ENCODE measurements at regions of chr16 and their contacts with region 1.

Region 1: DNA sequence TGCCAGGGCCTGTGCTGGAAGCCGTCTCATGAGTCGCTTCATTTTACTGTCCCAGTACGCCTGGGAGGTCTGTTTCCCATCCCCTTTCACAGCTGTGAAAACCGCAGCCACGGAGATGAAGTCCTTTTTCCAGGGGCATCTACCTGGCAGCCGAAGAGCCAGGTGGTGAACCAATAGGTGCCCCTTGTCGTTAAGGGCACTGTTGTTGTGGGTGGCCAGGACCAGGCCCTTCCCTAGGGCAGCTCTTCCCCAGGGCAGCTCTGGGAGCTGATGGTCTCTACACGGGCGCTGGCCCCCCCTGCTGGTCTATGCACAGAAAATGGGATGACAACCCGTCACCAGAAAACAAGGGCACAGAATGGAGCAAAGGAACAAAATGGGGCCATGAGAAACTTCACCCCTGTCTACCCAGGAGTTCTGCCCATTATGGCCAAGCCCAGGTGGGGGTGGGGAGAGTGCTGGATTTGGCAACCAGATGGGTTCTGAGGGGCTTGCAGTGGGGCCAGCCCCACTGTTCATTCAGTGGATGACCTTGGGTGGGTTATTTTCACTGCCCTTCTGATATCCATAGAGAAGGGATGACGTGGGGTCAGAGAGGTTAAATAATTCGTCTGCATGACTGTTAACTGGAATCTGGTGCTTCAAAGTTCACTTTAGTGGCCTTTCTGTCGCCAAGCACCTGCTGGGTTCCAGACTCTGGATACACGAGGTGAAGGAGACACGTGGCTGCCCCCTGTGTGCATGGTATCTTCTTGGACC is 11.5 kb downstream of the RMI2 start:
- DNase-seq: peak; percentile 73
- H3K4me3 Mint-ChIP-seq: peak overlapping the region; percentile 13
- H3K27ac Mint-ChIP-seq: peak overlapping the region; percentile 18
- H3K4me1 Mint-ChIP-seq: peaks cover 58% of the 10 kb centered on the region
- H3K27me3 Mint-ChIP-seq: peaks cover 28% of the 10 kb centered on the region

Region 2: GRCh38 chr16:11051879-11052808 is 304.6 kb before region 1 on chr16:
- CTCF ChIA-PET with region 1: interaction called, 6 read pairs
- POLR2A ChIA-PET with region 1: interaction called, 4 read pairs
- intact Hi-C with region 1: loop called (anchors 5 kb)
- DNase-seq: peak; percentile 94
- H3K4me3 Mint-ChIP-seq: peak overlapping the region; percentile 24
- H3K27ac Mint-ChIP-seq: peak overlapping the region; percentile 94
- H3K4me1 Mint-ChIP-seq: peaks cover 64% of the 10 kb centered on the region
- H3K27me3 Mint-ChIP-seq: no peaks in the 10 kb centered on the region

Region 3: DNA sequence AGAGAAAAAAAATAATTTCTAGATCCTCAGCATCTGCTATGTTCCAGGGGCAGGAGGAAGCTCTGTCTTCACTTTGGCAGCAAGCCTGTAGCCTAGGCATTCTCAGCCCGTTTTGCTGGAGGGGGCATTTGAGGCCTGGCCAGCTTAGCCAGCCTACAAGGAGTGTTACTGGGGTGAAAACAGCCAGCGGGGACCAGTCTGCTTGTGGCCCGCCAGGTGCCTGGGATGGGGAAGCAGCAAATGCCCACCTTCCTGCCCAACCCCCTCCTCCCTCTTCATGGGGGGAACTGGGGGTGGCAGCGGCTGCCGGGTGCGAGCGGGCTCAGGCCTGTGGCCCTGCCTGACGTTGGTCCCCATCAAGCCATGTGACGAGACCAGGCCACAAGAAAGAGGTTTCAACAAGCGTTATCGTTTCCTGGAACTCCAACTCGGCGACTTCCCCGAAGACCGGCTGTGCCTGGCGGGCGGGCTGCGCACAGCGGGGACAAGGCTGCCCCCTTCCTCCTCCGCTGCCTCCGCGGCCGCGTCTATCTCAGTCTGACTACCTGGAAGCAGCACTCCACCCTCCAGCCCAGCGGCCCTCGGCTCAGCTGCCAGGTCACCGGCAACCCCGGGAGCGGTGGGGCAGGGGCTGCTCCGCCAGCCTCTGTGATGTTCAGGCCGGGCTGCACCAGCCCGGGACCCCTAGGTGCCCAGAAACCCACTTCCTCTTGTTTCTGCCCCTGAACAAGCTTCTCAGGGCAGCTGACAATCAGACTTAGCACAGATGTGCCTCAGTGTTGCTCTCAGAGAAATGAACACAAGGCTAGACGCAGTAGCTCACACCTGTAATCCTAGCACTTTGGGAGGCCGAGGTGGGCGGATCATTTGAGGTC is 123.7 kb before region 1 on chr16:
- CTCF ChIA-PET with region 1: no interaction called
- POLR2A ChIA-PET with region 1: no interaction called
- intact Hi-C with region 1: loop called (anchors 1 kb)
- DNase-seq: peak; percentile 97
- H3K4me3 Mint-ChIP-seq: peak overlapping the region; percentile 62
- H3K27ac Mint-ChIP-seq: peak overlapping the region; percentile 99
- H3K4me1 Mint-ChIP-seq: peaks cover 74% of the 10 kb centered on the region
- H3K27me3 Mint-ChIP-seq: no peaks in the 10 kb centered on the region

Region 4: DNA sequence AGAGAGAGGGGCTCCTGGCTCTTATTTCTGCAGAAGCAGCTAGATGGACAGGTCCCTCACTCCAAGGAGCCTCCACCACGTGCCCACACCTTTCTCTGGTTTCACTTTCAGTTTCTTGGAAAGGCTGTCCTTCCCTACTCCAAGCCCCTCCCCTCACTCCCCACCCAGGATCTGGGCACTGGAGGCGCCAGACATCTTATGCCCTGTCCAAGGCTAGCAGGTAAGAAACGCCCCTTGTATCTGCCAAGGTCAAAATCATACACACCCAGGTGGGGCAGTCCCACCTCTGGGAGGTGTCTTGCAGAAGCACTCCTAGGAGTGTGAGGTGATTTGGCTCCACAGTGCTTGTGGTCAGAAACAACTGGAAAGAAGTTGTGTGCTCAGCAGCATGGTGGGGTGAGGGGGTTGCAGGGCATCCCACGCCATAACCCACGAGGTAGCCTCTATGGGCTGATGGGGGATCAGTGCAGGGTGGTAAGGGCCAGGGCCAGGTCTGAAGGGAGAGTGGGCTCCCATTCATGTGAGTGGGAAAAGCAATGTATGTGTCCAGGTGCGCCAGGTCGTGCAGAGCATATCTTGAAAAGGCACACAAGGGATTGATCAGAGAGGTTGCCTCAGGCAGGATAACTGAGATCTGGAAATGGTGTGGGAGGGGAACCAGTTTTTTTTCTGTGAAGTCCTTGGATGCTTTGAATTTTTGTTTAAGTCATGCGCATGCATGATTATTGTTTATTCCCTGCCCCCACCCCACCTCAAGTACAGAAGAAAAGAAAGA is 43.8 kb before region 1 on chr16:
- CTCF ChIA-PET with region 1: interaction called, 5 read pairs
- POLR2A ChIA-PET with region 1: interaction called, 3 read pairs
- intact Hi-C with region 1: loop called (anchors 1 kb)
- DNase-seq: peak; percentile 42
- H3K4me3 Mint-ChIP-seq: no peak overlapping the region
- H3K27ac Mint-ChIP-seq: no peak overlapping the region
- H3K4me1 Mint-ChIP-seq: peaks cover 45% of the 10 kb centered on the region
- H3K27me3 Mint-ChIP-seq: no peaks in the 10 kb centered on the region

Region 5: DNA sequence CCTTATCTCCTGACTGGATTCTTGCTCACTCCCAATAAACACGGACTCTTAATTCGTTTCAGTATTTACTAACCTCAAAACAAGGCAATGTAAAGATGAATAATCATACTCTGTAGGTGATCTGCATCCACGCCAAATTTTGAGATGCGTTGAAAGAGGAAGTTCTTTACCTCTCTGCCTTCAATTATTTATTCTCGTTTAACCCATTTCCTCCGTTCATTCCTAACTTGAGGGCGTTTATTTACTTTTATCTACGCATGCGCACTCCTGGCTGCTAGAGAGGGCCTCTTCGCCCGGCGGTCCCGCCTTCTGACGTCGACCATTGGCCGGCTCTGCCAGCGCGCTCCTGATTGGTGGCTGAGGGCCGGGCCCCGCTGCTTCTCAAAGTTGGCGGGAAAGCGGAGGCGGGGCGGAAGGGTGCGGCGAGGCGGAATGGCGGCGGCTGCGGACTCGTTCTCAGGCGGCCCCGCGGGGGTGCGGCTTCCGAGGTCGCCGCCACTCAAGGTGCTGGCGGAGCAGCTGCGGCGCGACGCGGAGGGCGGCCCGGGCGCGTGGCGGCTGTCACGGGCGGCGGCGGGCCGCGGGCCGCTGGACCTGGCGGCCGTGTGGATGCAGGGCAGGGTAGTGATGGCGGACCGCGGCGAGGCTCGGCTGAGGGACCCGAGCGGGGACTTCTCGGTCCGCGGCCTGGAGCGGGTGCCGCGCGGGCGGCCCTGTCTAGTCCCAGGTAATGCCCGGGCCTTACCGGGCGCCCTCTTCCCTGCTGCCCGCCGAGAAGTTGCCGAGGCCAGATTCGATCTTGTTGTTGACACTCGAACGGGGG is 11.5 kb before region 1 on chr16 and contains the start of gene RMI2:
- CTCF ChIA-PET with region 1: interaction called, 4 read pairs
- POLR2A ChIA-PET with region 1: interaction called, 5 read pairs
- intact Hi-C with region 1: loop called (anchors 1 kb)
- DNase-seq: peak; percentile 99
- H3K4me3 Mint-ChIP-seq: peak within 1 kb of the TSS; percentile 94
- H3K27ac Mint-ChIP-seq: peak within 1 kb of the TSS; percentile 86
- H3K4me1 Mint-ChIP-seq: peaks cover 47% of the 10 kb centered on the region
- H3K27me3 Mint-ChIP-seq: no peaks in the 10 kb centered on the region
- total RNA-seq, gene RMI2: 68.9 to 69.9 TPM

Measured in activated CD4-positive, alpha-beta memory T cell treated with anti-CD3 and anti-CD28 coated beads for 36 hours (primary cell).